Activated CD4-positive, alpha-beta T cell treated with anti-CD3 and anti-CD28 coated beads, Interleukin-2, amount 10 ng/mL, durations not matched to agents 7 days and 5 days (primary cell): ENCODE measurements at regions of chr10 and their contacts with region 1.

Region 1: DNA sequence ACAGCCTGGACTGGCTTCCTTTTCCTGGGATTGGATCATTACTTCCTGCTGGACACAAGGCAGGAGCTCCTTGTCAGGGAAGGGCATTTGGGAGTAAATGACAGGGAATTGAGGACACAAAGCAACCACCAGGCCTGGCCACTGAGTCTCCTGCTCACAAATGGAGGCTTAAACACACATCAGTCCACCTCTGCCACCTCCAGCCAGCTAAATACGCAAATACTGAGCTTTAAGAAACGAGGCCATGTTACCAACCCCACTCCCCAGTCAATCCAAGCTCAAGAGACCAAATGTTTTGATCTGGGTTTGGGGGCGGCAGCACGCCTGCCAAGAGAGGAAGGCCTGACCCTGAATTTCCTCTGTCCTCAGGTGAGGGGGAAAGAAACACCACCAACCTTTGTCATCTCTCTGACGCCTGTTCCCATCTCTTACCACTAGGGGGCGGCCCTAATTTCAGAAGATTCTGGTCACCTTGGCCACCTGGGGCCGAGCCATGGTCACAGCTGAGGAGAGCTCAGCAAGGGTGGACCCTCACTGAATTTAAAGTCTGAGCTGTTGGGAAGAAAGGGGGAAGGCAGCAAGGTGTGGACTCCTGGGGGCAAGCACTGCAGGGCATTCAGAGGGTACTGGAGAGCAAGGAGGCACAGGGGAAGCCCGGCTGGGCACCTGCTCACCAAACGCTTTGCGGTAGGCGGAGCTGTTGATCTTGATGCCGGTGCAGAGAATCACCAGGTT is 16.5 kb downstream of the AIFM2 start:
- DNase-seq: peak; percentile 64
- H3K4me3 Mint-ChIP-seq: no peak overlapping the region
- H3K27ac Mint-ChIP-seq: no peak overlapping the region
- H3K4me1 Mint-ChIP-seq: peaks cover 14% of the 10 kb centered on the region
- H3K27me3 Mint-ChIP-seq: no peaks in the 10 kb centered on the region

Region 2: DNA sequence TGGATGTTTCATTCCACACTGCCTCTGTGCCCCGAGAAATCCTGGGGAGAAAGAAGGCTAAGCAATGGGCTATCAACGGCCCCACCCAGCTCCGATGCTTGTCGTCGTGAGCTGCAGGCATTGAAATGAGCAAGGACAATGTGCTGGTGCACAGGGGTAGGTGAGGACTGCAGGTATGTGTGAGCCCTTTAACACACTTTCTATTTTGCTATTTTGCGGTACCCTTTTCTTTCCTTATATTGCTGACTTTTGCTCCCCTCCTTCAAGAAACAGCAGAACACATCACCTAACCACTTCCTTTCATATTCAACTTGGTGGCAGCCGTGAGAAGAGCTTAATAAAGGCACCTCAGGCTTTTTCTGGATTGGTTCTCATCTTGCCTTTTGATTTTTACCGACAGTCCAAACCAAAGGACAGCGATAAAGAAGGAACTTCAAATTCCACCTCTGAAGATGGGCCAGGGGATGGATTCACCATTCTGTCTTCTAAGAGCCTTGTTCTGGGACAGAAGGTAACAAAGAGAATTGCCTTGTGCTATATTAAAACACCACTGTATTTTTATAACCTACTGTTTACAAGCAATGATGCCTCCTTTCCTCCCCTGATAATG is 22.7 kb before region 1 on chr10:
- CTCF ChIA-PET with region 1: interaction called, 19 read pairs
- POLR2A ChIA-PET with region 1: no interaction called
- DNase-seq: peak; percentile 46
- H3K4me3 Mint-ChIP-seq: peak overlapping the region; percentile 76
- H3K27ac Mint-ChIP-seq: peak overlapping the region; percentile 92
- H3K4me1 Mint-ChIP-seq: peaks cover 39% of the 10 kb centered on the region
- H3K27me3 Mint-ChIP-seq: no peaks in the 10 kb centered on the region

Region 3: GRCh38 chr10:70101668-70102067 is 14.4 kb before region 1 on chr10:
- CTCF ChIA-PET with region 1: interaction called, 12 read pairs
- POLR2A ChIA-PET with region 1: no interaction called
- DNase-seq: no peak
- H3K4me3 Mint-ChIP-seq: no peak overlapping the region
- H3K27ac Mint-ChIP-seq: no peak overlapping the region
- H3K4me1 Mint-ChIP-seq: peaks cover 2% of the 10 kb centered on the region
- H3K27me3 Mint-ChIP-seq: no peaks in the 10 kb centered on the region